ENCODE measurements at regions of chr5 and their contacts with region 1.

Region 1: DNA sequence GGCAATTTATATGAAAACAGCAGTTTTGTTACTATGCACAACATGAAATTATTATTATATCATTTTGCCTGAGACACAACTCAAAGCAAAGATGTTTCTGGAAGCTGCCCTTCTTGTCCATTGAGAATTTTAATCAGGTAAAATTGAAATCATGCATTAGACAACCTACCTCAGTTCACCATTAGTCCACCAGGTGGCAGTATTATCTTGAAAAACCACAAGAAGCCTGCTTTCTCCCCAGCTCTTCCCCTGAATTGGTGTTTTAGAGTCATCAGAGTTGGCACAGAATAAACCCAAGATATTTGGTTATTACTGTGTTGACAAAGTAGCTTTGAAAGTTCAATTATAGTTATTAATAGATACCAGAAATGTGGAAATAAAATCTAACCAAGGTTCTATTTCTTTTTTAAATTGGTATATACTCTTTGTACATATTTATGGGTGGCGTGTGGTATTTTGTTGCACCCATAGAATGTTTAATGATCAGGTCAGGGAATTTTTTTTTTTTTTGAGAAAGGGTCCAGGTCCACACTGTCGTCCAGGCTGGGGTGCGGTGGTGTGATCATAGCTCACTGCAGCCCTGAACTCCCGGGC is 25.7 kb downstream of the UTP15 start:
- DNase-seq: no peak
- ATAC-seq: peak; percentile 81

Region 2: DNA sequence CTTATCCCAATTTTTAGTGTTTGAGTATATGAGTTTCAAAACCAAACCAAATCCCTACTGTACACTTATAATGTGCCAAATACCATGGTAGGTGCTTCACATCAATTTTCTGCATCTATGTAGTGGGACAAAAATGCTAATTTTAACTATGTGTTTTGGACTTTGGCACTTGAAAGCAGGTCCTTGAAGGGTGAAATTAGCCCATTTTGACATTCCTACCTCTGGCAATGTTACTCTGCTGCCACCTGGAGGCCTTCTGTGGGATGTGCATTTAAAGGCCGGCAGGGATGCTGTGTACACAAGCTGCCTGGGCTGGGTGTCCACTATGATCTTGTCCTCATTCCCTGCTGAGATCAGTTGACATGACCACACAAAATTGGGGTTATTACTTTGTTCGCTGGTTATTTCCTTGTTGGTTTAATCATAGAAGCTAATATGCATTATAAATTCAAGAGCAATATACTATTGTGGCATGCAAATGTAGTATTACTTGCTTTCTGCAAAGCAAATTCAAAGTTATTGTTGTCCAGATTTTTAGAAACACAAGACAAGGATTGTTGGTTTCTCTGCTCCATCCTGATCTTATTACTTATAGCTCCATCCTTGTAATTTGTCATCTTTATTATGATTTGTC is 201.6 kb after region 1 on chr5:
- intact Hi-C with region 1: loop called in 1 of 2 experiments (anchors 2 kb)
- DNase-seq: peak; percentile 31 to 74
- ATAC-seq: peak; percentile 94